Caco-2 (cell line): ENCODE measurements at regions of chr1 and their contacts with region 1.

Region 1: DNA sequence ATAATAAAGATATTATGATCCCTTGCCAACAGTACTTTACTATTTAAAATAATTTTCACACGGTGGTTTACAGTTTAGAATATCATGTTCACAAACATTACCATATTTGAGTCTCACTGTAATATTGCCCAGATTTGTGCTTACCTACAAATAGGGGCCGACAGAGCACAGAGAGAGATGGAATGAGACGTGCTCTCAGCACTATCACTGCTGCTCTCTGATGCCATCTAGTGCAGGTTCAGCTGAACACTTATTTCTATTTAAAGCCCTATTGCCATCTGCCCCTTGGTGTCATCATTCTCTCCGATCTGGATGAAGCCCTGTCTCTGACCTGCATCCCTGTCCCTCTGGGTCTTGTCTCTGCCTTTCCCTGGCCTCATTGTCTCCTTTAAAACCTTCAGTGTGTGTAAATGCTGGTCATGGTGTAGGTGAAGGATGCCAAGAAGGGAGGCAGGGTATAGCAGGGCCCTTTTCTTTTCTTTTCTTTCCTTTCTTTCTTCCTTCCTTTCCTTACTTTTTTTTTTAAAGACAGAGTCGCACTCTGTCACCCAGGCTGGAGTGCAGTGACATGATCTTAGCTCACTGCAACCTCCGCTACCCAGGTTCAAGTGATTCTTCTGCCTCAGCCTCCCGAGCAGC is 6.9 kb upstream of the GPATCH4 start:
- DNase-seq: peak; percentile 71 to 78
- H3K4me3 ChIP-seq: no peak overlapping the region
- H3K4me3 Mint-ChIP-seq: no peak overlapping the region
- H3K27ac Mint-ChIP-seq: no peak overlapping the region
- H3K4me1 ChIP-seq: 0 out of 2 replicates have a peak, but pooled peaks cover 4% of the 10 kb centered on the region
- H3K4me1 Mint-ChIP-seq: peaks cover 16% of the 10 kb centered on the region
- H3K27me3 ChIP-seq: no peaks in the 10 kb centered on the region
- H3K27me3 Mint-ChIP-seq: no peaks in the 10 kb centered on the region
- CTCF ChIP-seq: peak; percentile 82 to 83

Region 2: GRCh38 chr1:156571949-156572662 is 36.0 kb before region 1 on chr1 and contains the start of gene IQGAP3:
- CTCF ChIA-PET with region 1: no interaction called
- POLR2A ChIA-PET with region 1: no interaction called
- intact Hi-C with region 1: loop called (anchors 5 kb)
- DNase-seq: peak; percentile 91
- H3K4me3 ChIP-seq: peak within 1 kb of the TSS; percentile 96
- H3K4me3 Mint-ChIP-seq: peak within 1 kb of the TSS; percentile 97
- H3K27ac Mint-ChIP-seq: peak within 1 kb of the TSS; percentile 83
- H3K4me1 ChIP-seq: peaks cover 15% of the 10 kb centered on the region; the same call in 1 of the 2 replicates
- H3K4me1 Mint-ChIP-seq: peaks cover 18% of the 10 kb centered on the region
- H3K27me3 ChIP-seq: no peaks in the 10 kb centered on the region
- H3K27me3 Mint-ChIP-seq: no peaks in the 10 kb centered on the region
- CTCF ChIP-seq: no peak
- total RNA-seq, gene IQGAP3: 35.8 and 37.6 TPM in 2 replicates

Region 3: DNA sequence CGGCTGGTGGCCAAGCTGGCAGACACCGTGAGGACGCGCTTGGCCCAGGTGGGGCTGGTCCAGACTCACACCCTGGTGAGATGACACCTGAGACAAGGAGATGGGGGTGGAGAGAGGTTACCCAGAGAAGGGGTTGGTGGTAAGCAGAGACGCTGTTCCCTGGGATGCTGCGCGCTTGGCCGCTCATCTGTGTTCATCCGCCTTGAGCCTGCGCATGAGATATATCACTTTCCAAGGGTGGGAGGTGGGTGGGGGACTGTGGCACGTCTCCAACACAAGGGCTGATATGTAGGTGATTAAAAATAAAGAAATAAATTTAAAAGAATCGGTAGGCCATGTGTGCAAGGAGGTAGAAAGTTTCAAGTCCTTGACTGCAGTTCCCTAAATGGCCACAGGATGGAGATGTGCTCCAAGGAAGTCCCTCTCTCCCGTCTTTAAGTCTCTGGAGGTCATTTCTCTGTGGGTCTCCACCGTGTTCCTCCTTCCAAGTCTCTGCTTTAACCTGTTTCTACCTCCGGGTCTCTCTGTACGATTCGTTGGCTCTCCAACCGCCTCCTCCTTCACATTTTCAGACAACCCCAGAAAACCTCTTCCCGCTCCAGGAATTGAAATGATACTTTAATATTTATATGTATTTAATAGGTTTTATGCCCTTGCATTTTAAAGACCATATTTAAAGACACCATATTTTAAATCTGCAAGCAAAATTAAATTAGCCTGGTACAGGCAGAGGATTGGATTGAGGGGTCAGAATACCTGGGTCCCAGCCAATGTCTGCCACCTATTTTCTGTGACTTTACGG is 24.1 kb before region 1 on chr1:
- CTCF ChIA-PET with region 1: interaction called, 5 read pairs
- POLR2A ChIA-PET with region 1: no interaction called
- intact Hi-C with region 1: loop called (anchors 1 kb)
- DNase-seq: peak; percentile 75 to 78
- H3K4me3 ChIP-seq: no peak overlapping the region
- H3K4me3 Mint-ChIP-seq: no peak overlapping the region
- H3K27ac Mint-ChIP-seq: no peak overlapping the region
- H3K4me1 ChIP-seq: no peaks in the 10 kb centered on the region
- H3K4me1 Mint-ChIP-seq: no peaks in the 10 kb centered on the region
- H3K27me3 ChIP-seq: no peaks in the 10 kb centered on the region
- H3K27me3 Mint-ChIP-seq: no peaks in the 10 kb centered on the region
- CTCF ChIP-seq: peak; percentile 83 to 89

Region 4: GRCh38 chr1:156910309-156910782 is 302.2 kb after region 1 on chr1:
- CTCF ChIA-PET with region 1: no interaction called
- POLR2A ChIA-PET with region 1: no interaction called
- intact Hi-C with region 1: no loop called
- DNase-seq: peak in 1 of 2 experiments; percentile 67
- H3K4me3 ChIP-seq: no peak overlapping the region
- H3K4me3 Mint-ChIP-seq: no peak overlapping the region
- H3K27ac Mint-ChIP-seq: no peak overlapping the region
- H3K4me1 ChIP-seq: 0 out of 2 replicates have a peak, but pooled peaks cover 9% of the 10 kb centered on the region
- H3K4me1 Mint-ChIP-seq: no peaks in the 10 kb centered on the region
- H3K27me3 ChIP-seq: no peaks in the 10 kb centered on the region
- H3K27me3 Mint-ChIP-seq: no peaks in the 10 kb centered on the region
- CTCF ChIP-seq: peak; percentile 70 to 91